ENCODE measurements at regions of chr1 and their contacts with region 1.

Region 1: DNA sequence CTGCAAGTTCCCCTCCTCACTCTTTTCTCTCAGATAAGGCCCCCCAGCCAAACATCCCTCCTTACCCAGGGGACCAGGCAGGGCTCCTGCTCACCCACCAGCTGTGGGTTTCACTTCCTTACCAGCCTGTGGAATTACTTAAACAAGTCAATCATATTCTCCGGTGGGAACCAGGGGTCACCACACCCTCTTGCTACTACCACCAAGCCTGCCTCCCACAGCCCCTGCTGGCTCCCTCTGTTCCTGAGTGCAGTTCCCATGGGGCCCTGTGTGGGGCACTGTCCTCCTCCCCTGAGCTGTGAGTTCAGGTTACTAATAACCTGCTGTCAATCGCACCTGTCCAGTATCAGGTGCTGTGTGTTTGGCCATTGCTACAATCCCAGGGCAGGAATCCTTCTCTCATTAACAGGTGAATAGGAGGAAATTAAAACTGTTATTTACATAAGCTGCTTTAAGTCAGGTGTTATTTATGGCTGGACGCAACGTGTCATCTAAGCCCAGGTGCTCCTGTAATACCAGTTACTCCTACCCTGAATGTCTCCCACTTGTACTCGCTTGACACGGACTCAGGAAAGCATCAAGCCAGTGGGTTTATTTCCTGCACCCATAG is 53.1 kb upstream of the LBR start:
- H3K4me3 ChIP-seq: no peak overlapping the region
- H3K27ac ChIP-seq: no peak overlapping the region
- H3K4me1 ChIP-seq: no peaks in the 10 kb centered on the region
- CTCF ChIP-seq: peak; percentile 93

Region 2: GRCh38 chr1:225498549-225499136 is 17.7 kb after region 1 on chr1:
- CTCF ChIA-PET with region 1: interaction called, 45 read pairs
- POLR2A ChIA-PET with region 1: no interaction called
- H3K4me3 ChIP-seq: no peak overlapping the region
- H3K27ac ChIP-seq: no peak overlapping the region
- H3K4me1 ChIP-seq: peaks cover 7% of the 10 kb centered on the region; the same call in 1 of the 2 replicates
- CTCF ChIP-seq: no peak

Region 3: GRCh38 chr1:225523263-225523950 is 42.5 kb after region 1 on chr1:
- CTCF ChIA-PET with region 1: interaction called, 13 read pairs
- POLR2A ChIA-PET with region 1: no interaction called
- H3K4me3 ChIP-seq: no peak overlapping the region
- H3K27ac ChIP-seq: no peak overlapping the region
- H3K4me1 ChIP-seq: peaks cover 13% of the 10 kb centered on the region; the same call in 1 of the 2 replicates
- CTCF ChIP-seq: no peak

Region 4: GRCh38 chr1:225554216-225554812 is 73.4 kb after region 1 on chr1:
- CTCF ChIA-PET with region 1: interaction called, 11 read pairs
- POLR2A ChIA-PET with region 1: no interaction called
- H3K4me3 ChIP-seq: no peak overlapping the region
- H3K27ac ChIP-seq: no peak overlapping the region
- H3K4me1 ChIP-seq: no peaks in the 10 kb centered on the region
- CTCF ChIP-seq: 0 out of 2 replicates have a peak, but pooled peaks have one; percentile 33

Region 5: GRCh38 chr1:225840223-225840610 is 359.3 kb after region 1 on chr1:
- CTCF ChIA-PET with region 1: interaction called, 104 read pairs
- POLR2A ChIA-PET with region 1: interaction called, 6 read pairs
- H3K4me3 ChIP-seq: no peak overlapping the region
- H3K27ac ChIP-seq: no peak overlapping the region
- H3K4me1 ChIP-seq: no peaks in the 10 kb centered on the region
- CTCF ChIP-seq: no peak

Region 6: GRCh38 chr1:225911191-225912130 is 430.5 kb after region 1 on chr1:
- CTCF ChIA-PET with region 1: interaction called, 84 read pairs
- POLR2A ChIA-PET with region 1: no interaction called
- H3K4me3 ChIP-seq: no peak overlapping the region
- H3K27ac ChIP-seq: no peak overlapping the region
- H3K4me1 ChIP-seq: no peaks in the 10 kb centered on the region
- CTCF ChIP-seq: no peak